Activated CD4-positive, alpha-beta memory T cell treated with anti-CD3 and anti-CD28 coated beads, Interleukin-2, amount 10 ng/mL, durations not matched to agents 7 days and 5 days (primary cell): ENCODE measurements at regions of chr20 and their contacts with region 1.

Region 1: GRCh38 chr20:3156811-3157619 is 2.6 kb downstream of the FASTKD5 start:
- DNase-seq: no peak
- H3K4me3 Mint-ChIP-seq: peak overlapping the region; percentile 91
- H3K27ac Mint-ChIP-seq: peak overlapping the region; percentile 93
- H3K4me1 Mint-ChIP-seq: peaks cover 57% of the 10 kb centered on the region
- H3K27me3 Mint-ChIP-seq: no peaks in the 10 kb centered on the region

Region 2: DNA sequence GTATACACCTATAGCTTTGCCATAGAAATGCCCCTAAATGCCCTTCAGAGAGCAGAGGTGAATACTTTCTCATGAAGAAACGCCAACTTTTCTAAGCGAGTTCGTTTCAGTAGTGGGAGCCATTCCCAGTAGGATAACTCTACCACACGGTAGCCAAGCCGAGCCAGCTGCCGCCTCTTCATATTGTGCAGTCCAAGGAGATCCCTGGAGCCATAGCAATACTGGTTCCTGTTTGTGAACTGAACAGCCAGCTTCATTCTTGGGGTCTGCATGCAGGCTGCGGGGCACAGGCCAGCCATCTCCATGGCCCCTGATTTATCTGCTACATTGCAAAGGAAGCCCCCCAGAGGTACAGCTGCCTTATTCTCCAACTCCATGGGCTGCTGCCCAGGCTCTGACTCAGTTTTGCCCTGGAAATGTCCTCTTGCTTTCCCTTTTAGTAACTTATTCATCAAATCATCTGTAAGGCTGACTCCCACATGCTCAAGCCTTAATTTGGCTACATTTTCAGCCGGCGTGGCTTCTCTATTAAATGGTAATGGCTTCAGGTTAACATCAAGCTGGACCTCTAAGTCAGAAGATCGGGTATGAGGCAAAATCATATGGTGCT is 10.2 kb before region 1 on chr20:
- CTCF ChIA-PET with region 1: interaction called, 6 read pairs
- POLR2A ChIA-PET with region 1: interaction called, 10 read pairs
- DNase-seq: no peak
- H3K4me3 Mint-ChIP-seq: no peak overlapping the region
- H3K27ac Mint-ChIP-seq: no peak overlapping the region
- H3K4me1 Mint-ChIP-seq: peaks cover 17% of the 10 kb centered on the region
- H3K27me3 Mint-ChIP-seq: no peaks in the 10 kb centered on the region

Region 3: GRCh38 chr20:3172743-3173609 is 16.0 kb after region 1 on chr20 and contains the start of gene LZTS3:
- CTCF ChIA-PET with region 1: no interaction called
- POLR2A ChIA-PET with region 1: interaction called, 19 read pairs
- DNase-seq: peak; percentile 75
- H3K4me3 Mint-ChIP-seq: peak within 1 kb of the TSS; percentile 78
- H3K27ac Mint-ChIP-seq: no peak within 1 kb of the TSS
- H3K4me1 Mint-ChIP-seq: peaks cover 13% of the 10 kb centered on the region
- H3K27me3 Mint-ChIP-seq: peaks cover 52% of the 10 kb centered on the region
- total RNA-seq, gene LZTS3: 0.90 to 1.0 TPM

Region 4: DNA sequence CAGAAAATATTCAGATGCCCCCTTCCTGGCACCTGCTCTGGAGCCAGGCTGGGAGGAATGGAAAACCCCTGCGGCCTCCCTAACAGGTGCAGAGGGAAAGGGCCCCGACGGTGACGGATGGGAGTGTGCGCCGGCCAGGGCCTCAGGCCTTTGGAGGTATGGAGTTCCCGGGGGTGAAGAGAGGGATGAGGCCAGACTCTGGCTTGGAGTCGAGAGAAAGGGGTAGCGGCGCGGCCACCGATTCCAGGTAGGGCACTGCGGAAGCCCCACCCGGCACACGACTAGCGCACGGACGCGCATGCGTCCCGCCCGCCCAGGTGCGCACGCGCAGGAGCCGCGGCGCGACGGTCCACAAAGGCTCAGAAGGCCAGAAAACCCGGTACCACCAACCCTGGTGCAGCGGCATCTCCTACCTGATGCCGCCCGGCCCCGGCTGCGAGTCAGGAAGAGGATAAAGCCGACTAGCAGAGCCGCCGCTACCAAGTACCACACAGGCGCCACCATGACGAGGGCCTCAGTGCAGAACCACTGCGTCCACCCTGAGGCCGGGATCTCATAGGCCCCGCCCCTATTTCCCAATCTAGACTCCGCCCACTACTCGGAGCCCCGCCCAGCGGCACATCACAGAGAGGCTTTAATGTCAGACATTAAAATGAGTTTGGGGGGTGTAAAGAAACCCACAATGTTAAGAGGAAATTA is 47.3 kb after region 1 on chr20 and contains the start of gene DDRGK1:
- CTCF ChIA-PET with region 1: interaction called, 5 read pairs
- POLR2A ChIA-PET with region 1: interaction called, 48 read pairs
- DNase-seq: peak; percentile 93
- H3K4me3 Mint-ChIP-seq: peak within 1 kb of the TSS; percentile 89
- H3K27ac Mint-ChIP-seq: peak within 1 kb of the TSS; percentile 91
- H3K4me1 Mint-ChIP-seq: peaks cover 28% of the 10 kb centered on the region
- H3K27me3 Mint-ChIP-seq: no peaks in the 10 kb centered on the region
- total RNA-seq, gene DDRGK1: 66.6 to 68.3 TPM

Region 5: DNA sequence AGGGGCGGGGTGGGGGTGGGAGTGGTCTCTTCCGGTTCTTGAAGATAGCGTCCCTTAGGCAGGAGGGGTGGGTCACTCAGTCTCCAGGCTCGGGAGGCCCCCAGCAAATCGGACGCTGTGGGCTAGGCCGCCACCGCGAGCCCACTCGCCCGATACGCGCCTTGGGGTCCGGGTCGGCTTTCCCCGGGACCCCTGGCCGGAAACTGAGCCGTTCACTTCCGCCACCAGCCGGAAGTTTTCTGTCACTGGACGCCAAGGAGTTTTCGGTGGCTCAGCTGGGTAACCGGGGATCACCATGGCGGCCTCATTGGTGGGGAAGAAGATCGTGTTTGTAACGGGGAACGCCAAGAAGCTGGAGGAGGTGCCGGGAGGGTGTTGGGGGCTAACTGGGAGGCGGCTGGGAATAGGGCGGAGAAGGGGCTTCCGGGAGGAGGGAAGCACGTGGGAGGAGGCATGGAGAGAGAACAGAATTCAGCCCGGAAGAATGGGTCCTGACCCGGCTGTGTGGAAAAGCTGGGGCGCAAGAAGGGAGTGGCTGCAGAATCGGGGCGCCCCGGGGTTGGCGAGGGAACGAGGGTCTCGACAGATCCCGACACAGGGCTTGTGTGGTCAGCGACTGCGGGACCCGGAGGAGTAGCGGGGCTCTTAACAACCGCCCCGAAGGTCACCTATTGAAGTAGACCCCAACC is 52.4 kb after region 1 on chr20 and contains the start of gene ITPA:
- CTCF ChIA-PET with region 1: interaction called, 4 read pairs
- POLR2A ChIA-PET with region 1: interaction called, 48 read pairs
- DNase-seq: peak; percentile 72
- H3K4me3 Mint-ChIP-seq: peak within 1 kb of the TSS; percentile 95
- H3K27ac Mint-ChIP-seq: peak within 1 kb of the TSS; percentile 90
- H3K4me1 Mint-ChIP-seq: peaks cover 23% of the 10 kb centered on the region
- H3K27me3 Mint-ChIP-seq: no peaks in the 10 kb centered on the region
- total RNA-seq, gene ITPA: 42.3 to 49.2 TPM

Region 6: DNA sequence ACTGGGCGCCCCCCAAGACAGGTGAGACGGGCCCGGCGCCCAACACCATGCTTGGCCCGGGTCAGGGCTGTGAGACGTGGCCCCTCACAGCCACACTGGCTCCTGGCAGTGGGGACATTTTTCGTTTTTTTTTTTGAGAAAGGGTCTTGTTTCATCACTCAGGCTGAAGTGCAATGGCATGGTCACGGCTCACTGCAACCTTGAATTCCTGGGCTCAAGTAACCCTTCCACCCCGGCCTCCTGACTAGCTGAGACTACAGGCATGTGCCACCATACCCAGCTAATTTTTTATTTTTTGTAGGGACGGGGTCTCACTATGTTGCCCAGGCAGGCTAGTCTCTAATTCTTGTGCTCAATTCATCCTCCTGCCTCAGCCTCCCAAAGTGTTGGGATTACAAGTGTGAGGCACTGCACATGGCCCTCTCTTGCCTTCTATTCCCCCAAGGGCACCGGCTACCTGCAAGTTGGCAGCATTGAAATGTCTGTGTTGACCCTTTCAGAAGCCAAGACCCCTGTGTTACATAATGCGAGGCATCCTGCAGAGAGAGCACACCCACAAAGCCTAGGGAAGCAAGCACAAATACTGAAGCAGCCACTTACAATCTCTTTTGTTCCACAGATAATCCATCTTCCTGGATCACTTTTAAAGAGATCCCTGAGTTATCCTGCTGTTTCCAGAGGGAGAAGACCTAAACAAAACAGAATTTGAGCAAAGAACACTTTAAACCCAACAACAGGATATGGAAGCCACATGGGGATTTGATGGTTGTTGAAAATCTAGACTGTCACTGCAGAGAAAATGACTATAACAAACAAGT is 139.5 kb after region 1 on chr20:
- CTCF ChIA-PET with region 1: no interaction called
- POLR2A ChIA-PET with region 1: no interaction called
- DNase-seq: no peak
- H3K4me3 Mint-ChIP-seq: no peak overlapping the region
- H3K27ac Mint-ChIP-seq: no peak overlapping the region
- H3K4me1 Mint-ChIP-seq: no peaks in the 10 kb centered on the region
- H3K27me3 Mint-ChIP-seq: no peaks in the 10 kb centered on the region